ENCODE measurements at regions of chr12 and their contacts with region 1.

Region 1: GRCh38 chr12:4044736-4045730 is 171.8 kb upstream of the PARP11 start:
- DNase-seq: peak in 1 of 2 donors; percentile 74
- H3K4me3 ChIP-seq: no peak overlapping the region
- H3K27ac ChIP-seq: no peak overlapping the region
- H3K4me1 ChIP-seq: no peaks in the 10 kb centered on the region
- H3K27me3 ChIP-seq: no peaks in the 10 kb centered on the region
- CTCF ChIP-seq: no peak
- POLR2A ChIP-seq: no peak

Region 2: DNA sequence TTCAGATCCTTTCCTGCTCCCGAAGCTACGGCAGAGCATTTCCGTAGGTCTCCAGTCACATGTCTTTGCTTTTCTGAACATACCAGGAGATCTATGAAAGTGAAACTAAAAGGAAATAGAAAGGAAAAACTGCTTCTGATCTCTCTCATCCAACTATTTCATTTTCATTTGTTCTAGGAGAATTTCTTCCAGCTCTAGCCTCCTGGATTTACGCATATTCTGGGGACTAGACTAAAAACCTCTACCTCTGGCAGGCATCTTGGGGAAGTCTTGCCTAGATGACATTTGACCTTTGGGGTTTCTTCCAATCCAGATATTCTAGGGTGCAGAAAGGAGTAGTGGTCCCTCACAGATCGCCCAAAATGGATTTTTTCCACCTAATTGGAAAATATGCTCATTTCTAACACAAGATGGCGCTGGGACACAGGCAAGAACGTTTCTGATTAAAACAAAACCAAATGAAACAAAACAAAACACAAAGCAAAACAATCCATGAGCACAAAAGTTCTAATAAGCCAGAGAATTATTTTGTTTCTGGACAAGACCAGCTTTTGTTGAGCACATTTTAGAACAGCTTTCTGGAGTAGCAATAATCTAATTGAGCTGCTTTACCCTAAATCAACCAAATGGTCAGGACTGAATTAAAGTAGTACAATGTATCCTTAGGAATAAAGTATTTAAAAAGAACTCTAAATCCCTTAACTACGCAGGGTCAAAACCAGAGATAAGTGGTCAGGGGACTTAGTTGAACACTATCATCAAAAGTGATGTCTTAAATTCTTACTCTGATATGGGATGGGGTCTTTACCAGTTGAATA is 159.5 kb before region 1 on chr12:
- intact Hi-C with region 1: loop called (anchors 5 kb)
- DNase-seq: no peak
- H3K4me3 ChIP-seq: peak overlapping the region; percentile 38
- H3K27ac ChIP-seq: peak overlapping the region; percentile 84
- H3K4me1 ChIP-seq: no peaks in the 10 kb centered on the region
- H3K27me3 ChIP-seq: no peaks in the 10 kb centered on the region
- CTCF ChIP-seq: peak; percentile 67 to 88 (median 78)
- POLR2A ChIP-seq: no peak

Region 3: GRCh38 chr12:3998968-3999826 is 45.8 kb before region 1 on chr12:
- intact Hi-C with region 1: loop called (anchors 10 kb)
- DNase-seq: no peak
- H3K4me3 ChIP-seq: no peak overlapping the region
- H3K27ac ChIP-seq: no peak overlapping the region
- H3K4me1 ChIP-seq: no peaks in the 10 kb centered on the region
- H3K27me3 ChIP-seq: no peaks in the 10 kb centered on the region
- CTCF ChIP-seq: no peak
- POLR2A ChIP-seq: no peak

Region 4: GRCh38 chr12:4276524-4277204 is 231.6 kb after region 1 on chr12:
- intact Hi-C with region 1: loop called (anchors 5 kb)
- DNase-seq: peak in 1 of 2 donors; percentile 93
- H3K4me3 ChIP-seq: peak overlapping the region; percentile 50 to 80
- H3K27ac ChIP-seq: peak overlapping the region; percentile 97
- H3K4me1 ChIP-seq: peaks cover 75% of the 10 kb centered on the region
- H3K27me3 ChIP-seq: no peaks in the 10 kb centered on the region
- CTCF ChIP-seq: peak; percentile 88 to 98 (median 96)
- POLR2A ChIP-seq: peak in 1 of 2 donors; percentile 15

Measured in vagina (tissue), 2 donors.